ENCODE measurements at regions of chr4 and their contacts with region 1.

Region 1: GRCh38 chr4:47122592-47123291 is 91.4 kb downstream of the GABRB1 start:
- DNase-seq: peak; percentile 58
- H3K4me3 ChIP-seq: no peak overlapping the region
- H3K27ac ChIP-seq: no peak overlapping the region
- H3K4me1 ChIP-seq: no peaks in the 10 kb centered on the region
- H3K27me3 ChIP-seq: peaks cover 3% of the 10 kb centered on the region
- CTCF ChIP-seq: peak; percentile 92 to 94

Region 2: DNA sequence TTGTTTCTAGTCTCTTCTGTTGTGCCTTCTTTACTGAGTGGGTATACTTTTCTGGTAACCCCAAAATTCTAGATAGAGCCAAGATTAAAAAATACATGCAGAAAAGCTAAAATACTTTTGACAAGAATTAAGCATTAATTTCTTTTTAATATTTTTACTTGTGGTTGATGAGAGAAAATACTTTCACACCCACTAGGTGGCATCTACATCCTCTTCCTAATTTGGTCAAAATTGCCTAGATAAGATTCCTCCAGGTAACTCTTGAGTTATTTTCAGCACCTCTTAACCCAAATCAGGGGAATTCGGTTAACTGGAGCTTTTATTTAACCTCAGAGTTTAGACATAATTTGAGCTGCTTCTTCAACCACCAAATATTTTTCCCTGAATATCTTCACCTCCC is 185.2 kb before region 1 on chr4:
- CTCF ChIA-PET with region 1: no interaction called
- dilution Hi-C with region 1: no loop called
- in situ Hi-C with region 1: no loop called
- intact Hi-C with region 1: loop called (anchors 1 kb)
- DNase-seq: no peak
- H3K4me3 ChIP-seq: no peak overlapping the region
- H3K27ac ChIP-seq: no peak overlapping the region
- H3K4me1 ChIP-seq: no peaks in the 10 kb centered on the region
- H3K27me3 ChIP-seq: no peaks in the 10 kb centered on the region
- CTCF ChIP-seq: peak; percentile 10 to 39

Region 3: DNA sequence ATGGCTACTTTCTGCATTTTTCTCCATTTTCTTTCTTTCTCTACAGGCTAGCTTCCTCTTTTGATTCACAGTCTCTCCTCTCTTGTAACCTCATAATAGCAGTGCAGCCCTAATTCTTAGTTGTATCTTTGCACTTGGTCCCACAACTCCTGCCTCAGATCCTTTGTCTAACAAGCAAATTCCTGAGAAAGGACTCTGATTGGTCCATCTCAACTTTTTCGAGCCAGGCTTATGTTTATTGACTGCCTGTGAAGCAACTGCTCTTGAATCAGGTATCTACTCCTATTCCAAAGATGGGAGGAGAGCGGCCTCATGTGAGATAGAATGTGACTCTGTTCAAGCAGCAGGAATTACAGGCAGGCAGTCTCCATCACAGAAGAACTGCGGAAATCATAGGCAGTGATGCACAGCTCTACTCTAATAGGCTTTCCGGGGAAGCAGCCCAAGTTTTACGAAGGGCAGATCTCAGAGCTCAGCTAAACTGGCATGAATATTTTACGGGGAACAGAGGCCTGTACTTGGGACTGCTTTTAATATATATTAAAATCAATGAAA is 32.2 kb after region 1 on chr4:
- CTCF ChIA-PET with region 1: no interaction called
- dilution Hi-C with region 1: no loop called
- in situ Hi-C with region 1: no loop called
- intact Hi-C with region 1: no loop called
- DNase-seq: no peak
- H3K4me3 ChIP-seq: no peak overlapping the region
- H3K27ac ChIP-seq: no peak overlapping the region
- H3K4me1 ChIP-seq: no peaks in the 10 kb centered on the region
- H3K27me3 ChIP-seq: peaks cover 2% of the 10 kb centered on the region
- CTCF ChIP-seq: no peak

Region 4: GRCh38 chr4:47383829-47384427 is 261.2 kb after region 1 on chr4:
- CTCF ChIA-PET with region 1: no interaction called
- dilution Hi-C with region 1: no loop called
- in situ Hi-C with region 1: no loop called
- intact Hi-C with region 1: loop called (anchors 2 kb)
- DNase-seq: peak; percentile 11
- H3K4me3 ChIP-seq: no peak overlapping the region
- H3K27ac ChIP-seq: no peak overlapping the region
- H3K4me1 ChIP-seq: no peaks in the 10 kb centered on the region
- H3K27me3 ChIP-seq: no peaks in the 10 kb centered on the region
- CTCF ChIP-seq: peak; percentile 32 to 55

Measured in mammary epithelial cell (primary cell).